ENCODE measurements at regions of chr12 and their contacts with region 1.

Region 1: DNA sequence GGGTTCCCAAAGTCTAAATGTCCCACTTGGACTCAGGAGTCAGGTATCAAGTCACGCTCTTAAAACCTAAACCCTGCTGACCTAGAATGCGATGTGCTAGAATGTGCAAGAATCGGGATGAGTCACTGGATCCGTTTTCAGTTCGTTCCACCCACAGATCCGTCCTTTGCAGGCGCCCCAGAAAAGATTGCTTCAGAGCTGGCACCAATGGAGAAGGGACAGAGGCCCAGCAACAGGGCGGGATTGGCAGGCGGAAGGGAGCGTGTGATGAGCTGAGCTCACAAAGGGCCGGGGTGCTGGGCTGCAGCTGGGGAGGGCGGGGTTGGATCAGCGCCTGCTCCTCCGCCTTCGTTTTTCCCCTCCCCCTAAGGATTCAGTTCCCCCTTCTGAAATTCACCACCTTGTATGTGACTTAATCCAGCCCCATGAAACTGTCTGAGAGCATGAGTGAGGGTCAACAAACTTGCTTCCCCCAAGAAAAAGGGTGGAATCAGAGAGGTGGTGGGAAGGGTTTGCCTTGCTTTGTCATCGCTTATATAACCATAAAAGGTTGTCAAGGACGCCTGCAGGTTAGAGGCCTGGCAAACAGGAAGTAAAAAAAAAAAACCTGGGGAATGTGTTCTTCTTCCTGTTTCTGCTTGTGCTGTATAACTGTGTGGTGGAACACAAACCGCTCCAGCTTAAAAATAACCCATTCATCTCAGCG is 2.8 kb upstream of the UBC start:
- DNase-seq: peak; percentile 99
- ATAC-seq: peak; percentile 81
- H3K4me3 ChIP-seq: peak overlapping the region; percentile 53 to 99 (median 86)
- H3K27ac ChIP-seq: peak overlapping the region; percentile 100
- H3K4me1 ChIP-seq: peaks cover 50% of the 10 kb centered on the region
- H3K27me3 ChIP-seq: no peaks in the 10 kb centered on the region; a peak in 1 of 5 replicates
- CTCF ChIP-seq: no peak
- EP300 ChIP-seq: peak; percentile 92 to 96
- POLR2A ChIP-seq: peak; percentile 54 to 65; a peak in 3 of 4 replicates
- RAD21 ChIP-seq: peak; percentile 9; the same call in 1 of the 2 replicates

Region 2: GRCh38 chr12:124906606-124907261 is 10.6 kb before region 1 on chr12:
- CTCF ChIA-PET with region 1: interaction called, 4 read pairs
- POLR2A ChIA-PET with region 1: interaction called, 83 read pairs
- in situ Hi-C with region 1: no loop called
- intact Hi-C with region 1: no loop called
- DNase-seq: peak; percentile 93
- ATAC-seq: peak; percentile 51
- H3K4me3 ChIP-seq: no peak overlapping the region
- H3K27ac ChIP-seq: no peak overlapping the region
- H3K4me1 ChIP-seq: peaks cover 69% of the 10 kb centered on the region
- H3K27me3 ChIP-seq: no peaks in the 10 kb centered on the region
- CTCF ChIP-seq: peak; percentile 91
- EP300 ChIP-seq: no peak
- POLR2A ChIP-seq: peak in 1 of 2 experiments; percentile 47; a peak in 1 of 4 replicates
- RAD21 ChIP-seq: peak; percentile 90

Region 3: DNA sequence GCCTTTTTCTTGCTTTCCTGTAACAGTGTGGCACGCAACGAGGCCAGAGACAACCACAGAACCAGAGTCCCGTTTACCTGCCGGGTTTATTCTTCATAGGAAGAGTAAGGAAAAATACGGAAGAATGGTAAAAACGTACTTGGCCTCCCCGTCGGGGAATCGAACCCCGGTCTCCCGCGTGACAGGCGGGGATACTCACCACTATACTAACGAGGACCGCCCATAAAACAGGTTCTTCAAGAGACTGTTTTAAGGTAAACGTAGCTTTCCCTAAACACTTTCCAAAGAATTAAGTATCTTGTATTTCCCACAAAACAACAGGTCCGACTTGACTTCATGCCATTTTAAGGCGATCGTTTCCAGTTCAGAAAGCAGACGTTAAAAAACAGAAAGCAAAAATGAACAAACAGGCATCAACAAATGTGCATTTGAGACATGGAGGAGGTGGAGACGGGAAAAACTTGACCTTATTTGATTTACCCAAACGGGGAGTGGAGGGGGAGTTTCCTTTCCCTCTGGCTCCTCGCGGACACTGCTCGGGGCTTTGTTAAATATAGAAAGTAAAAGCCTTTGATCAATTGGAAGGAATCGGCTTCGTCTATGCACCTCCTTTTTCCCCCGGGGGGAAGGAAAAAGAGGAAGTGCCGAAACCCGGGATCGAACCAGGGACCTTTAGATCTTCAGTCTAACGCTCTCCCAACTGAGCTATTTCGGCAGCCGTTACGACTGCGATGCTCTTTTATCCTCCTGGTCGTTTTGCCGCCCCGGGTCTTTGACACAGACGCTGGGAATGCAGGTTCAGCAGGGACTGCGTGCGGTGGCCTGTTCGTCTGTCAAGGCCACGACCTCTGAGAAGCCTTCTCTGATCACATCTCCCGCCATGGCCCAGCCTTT is 10.2 kb after region 1 on chr12:
- CTCF ChIA-PET with region 1: no interaction called
- POLR2A ChIA-PET with region 1: interaction called, 60 read pairs
- in situ Hi-C with region 1: no loop called
- intact Hi-C with region 1: loop called (anchors 1 kb)
- DNase-seq: peak; percentile 85
- ATAC-seq: peak; percentile 66
- H3K4me3 ChIP-seq: peak overlapping the region; percentile 80 to 98 (median 93)
- H3K27ac ChIP-seq: peak overlapping the region; percentile 77
- H3K4me1 ChIP-seq: peaks cover 42% of the 10 kb centered on the region
- H3K27me3 ChIP-seq: no peaks in the 10 kb centered on the region; a peak in 1 of 5 replicates
- CTCF ChIP-seq: no peak
- EP300 ChIP-seq: 0 out of 4 replicates have a peak, but pooled peaks of 1 of the 2 experiments have one; percentile 20
- POLR2A ChIP-seq: no peak
- RAD21 ChIP-seq: 0 out of 2 replicates have a peak, but pooled peaks have one; percentile 20